Gastrocnemius medialis (tissue), 4 donors: ENCODE measurements at regions of chr3 and their contacts with region 1.

Region 1: DNA sequence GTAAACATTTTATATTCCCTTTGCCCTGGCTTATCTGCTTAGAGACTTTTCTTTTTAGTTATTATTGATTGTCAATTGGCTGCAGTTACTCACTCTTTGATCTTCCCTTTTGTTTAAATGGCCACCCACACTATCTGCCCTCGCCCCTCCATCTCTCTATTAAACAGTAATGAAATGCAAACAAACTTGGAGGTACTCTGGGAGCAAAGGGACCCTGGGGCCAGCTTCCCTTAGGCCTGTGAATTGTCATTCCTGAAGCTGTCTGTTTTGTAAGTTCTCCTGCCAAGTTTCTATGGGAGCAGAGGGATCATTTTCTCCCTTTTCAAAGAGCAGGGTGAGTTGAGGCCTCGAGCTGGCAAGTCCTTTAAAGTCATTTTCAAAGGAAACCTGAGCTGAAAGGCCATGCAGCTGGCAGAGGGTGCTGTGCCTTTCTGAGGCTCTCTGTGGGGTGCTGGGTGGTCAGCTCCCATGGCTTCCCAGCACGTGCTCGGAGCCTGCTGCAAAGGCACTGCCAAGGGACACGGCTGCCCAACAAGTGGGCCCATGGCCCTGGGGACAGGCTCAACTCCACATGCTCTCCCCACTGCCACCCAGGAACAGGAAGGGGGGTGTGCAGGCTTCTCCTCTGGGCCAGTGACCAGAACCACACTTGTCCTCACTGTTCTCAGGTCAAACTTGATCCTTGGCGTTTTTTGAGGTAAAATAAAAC is 17.4 kb upstream of the RTP2 start:
- DNase-seq: peak; percentile 79 to 97
- ATAC-seq: peak; percentile 55 to 82
- H3K4me3 ChIP-seq: no peak overlapping the region
- H3K27ac ChIP-seq: peak overlapping the region; percentile 80 to 88 (median 81)
- H3K4me1 ChIP-seq: peaks cover 17 to 27% of the 10 kb centered on the region in 2 donors
- H3K27me3 ChIP-seq: no peaks in the 10 kb centered on the region
- CTCF ChIP-seq: no peak
- POLR2A ChIP-seq: peak in 1 of 2 donors; percentile 25

Region 2: DNA sequence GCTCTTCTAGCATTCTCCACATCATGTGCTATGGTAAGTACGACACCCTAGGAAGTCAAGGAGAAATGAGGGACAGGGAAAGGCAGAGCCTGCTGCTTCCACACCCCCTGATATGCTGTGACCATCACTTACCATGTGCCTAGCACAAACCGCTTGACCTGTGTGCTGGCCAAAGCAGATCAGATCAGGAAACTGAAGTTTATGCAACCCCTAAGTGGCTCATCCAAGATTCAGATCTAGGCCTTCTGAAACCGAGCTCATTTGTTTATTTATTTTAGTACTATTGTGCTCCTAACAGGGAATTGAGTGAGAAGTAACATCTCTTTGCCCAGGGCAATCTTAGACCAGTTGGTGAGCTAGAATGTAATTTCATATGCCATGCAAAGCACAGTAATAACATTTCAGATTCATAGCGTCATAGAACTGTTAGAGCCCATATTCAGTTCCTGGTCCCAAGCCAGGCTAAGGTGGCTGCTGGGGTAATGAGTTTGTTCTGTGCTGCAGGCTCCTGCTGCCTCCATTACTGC is 17.2 kb before region 1 on chr3 and contains the start of gene RTP2:
- in situ Hi-C with region 1: no loop called
- intact Hi-C with region 1: loop called (anchors 2 kb)
- DNase-seq: peak in 1 of 2 donors; percentile 61
- ATAC-seq: peak; percentile 53 to 77
- H3K4me3 ChIP-seq: no peak within 1 kb of the TSS
- H3K27ac ChIP-seq: peak within 1 kb of the TSS; percentile 76 to 90 (median 80)
- H3K4me1 ChIP-seq: peaks cover 43 to 59% of the 10 kb centered on the region in 2 donors
- H3K27me3 ChIP-seq: no peaks in the 10 kb centered on the region
- CTCF ChIP-seq: no peak
- POLR2A ChIP-seq: no peak
- total RNA-seq, gene RTP2: 1.9 to 3.1 (median 2.3) TPM in 3 of 4 donors, not detected in the other